Mammary epithelial cell (primary cell): ENCODE measurements at regions of chr4 and their contacts with region 1.

Region 1: GRCh38 chr4:43456383-43456782 is 563.9 kb downstream of the GRXCR1 start:
- DNase-seq: peak; percentile 66
- H3K4me3 ChIP-seq: peak overlapping the region in 1 of 3 experiments; percentile 4
- H3K27ac ChIP-seq: peak overlapping the region; percentile 72
- H3K4me1 ChIP-seq: peaks cover 38% of the 10 kb centered on the region
- H3K27me3 ChIP-seq: no peaks in the 10 kb centered on the region
- CTCF ChIP-seq: no peak

Region 2: DNA sequence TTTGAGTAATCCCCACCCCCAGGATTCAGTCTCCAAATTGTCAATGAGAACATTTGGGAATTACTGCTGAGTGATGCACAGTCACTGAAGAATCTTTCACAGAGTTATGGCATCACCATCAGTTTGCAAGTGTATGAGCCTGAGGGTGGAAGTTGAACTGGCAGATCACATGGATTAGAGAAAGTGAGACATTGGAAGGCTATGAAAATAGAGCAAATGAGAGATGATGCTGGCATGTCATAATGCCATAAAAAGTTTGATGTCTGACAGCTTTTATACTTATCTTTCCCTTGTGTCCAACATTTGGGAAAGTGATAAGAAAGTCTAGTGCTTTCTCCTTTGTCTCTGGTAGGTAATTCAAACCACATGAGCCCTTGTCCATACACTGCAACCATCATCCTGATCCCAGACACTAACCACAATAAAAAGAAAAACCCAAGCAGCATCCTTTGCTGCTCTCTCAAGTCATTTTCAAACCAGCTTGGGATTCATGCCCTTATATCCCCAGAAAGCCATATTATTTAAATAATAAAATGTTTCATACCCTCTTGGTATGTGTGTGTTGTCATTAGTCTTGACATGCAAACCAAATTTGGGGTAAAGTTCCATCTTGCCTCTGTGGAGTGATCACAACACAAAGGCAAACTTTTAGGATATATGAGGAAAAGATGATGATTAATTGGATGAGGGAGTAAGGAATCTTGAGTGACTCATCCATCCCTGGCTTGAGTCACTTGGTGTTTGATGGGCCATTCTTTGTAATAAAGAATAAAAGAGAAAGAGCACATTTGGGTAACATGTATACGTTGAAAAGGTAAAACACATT is 124.9 kb before region 1 on chr4:
- CTCF ChIA-PET with region 1: no interaction called
- dilution Hi-C with region 1: no loop called
- in situ Hi-C with region 1: no loop called
- intact Hi-C with region 1: loop called (anchors 2 kb)
- DNase-seq: peak; percentile 78
- H3K4me3 ChIP-seq: no peak overlapping the region
- H3K27ac ChIP-seq: peak overlapping the region; percentile 82
- H3K4me1 ChIP-seq: peaks cover 32% of the 10 kb centered on the region
- H3K27me3 ChIP-seq: no peaks in the 10 kb centered on the region
- CTCF ChIP-seq: no peak

Region 3: GRCh38 chr4:43485196-43485595 is 28.8 kb after region 1 on chr4:
- CTCF ChIA-PET with region 1: no interaction called
- dilution Hi-C with region 1: no loop called
- in situ Hi-C with region 1: no loop called
- intact Hi-C with region 1: no loop called
- DNase-seq: no peak
- H3K4me3 ChIP-seq: no peak overlapping the region
- H3K27ac ChIP-seq: no peak overlapping the region
- H3K4me1 ChIP-seq: no peaks in the 10 kb centered on the region
- H3K27me3 ChIP-seq: no peaks in the 10 kb centered on the region
- CTCF ChIP-seq: no peak